Heart right ventricle (tissue), 16 donors: ENCODE measurements at regions of chr6 and their contacts with region 1.

Region 1: GRCh38 chr6:44446628-44447306 is 59.3 kb downstream of the CDC5L start:
- DNase-seq: no peak
- ATAC-seq: no peak
- H3K4me3 ChIP-seq: no peak overlapping the region
- H3K27ac ChIP-seq: no peak overlapping the region
- H3K4me1 ChIP-seq: peaks cover 0 to 18% (median under 1%) of the 10 kb centered on the region in 9 donors
- H3K27me3 ChIP-seq: no peaks in the 10 kb centered on the region
- CTCF ChIP-seq: no peak

Region 2: DNA sequence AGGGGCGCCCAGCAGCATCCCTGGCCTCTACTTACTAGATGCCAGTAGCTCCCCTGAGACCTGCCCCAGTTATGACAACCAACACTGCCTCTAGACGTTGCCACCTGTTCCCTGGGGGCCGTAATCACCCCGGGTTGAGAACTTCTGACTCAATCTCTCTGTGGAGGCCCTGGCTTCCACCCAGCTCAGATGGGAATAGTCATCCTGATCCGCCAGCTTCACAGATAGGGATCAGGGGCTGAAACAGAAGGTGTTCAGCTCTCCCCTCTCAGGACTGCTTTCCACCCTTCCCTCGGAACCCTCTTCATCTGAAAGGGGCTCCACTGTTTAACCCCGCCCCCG is 284.8 kb before region 1 on chr6:
- intact Hi-C with region 1: loop called in 1 of 10 experiments (anchors 10 kb)
- DNase-seq: no peak
- ATAC-seq: no peak
- H3K4me3 ChIP-seq: no peak overlapping the region
- H3K27ac ChIP-seq: no peak overlapping the region
- H3K4me1 ChIP-seq: no peaks in the 10 kb centered on the region
- H3K27me3 ChIP-seq: peaks cover 0 to 5% (median 0%) of the 10 kb centered on the region in 7 donors
- CTCF ChIP-seq: no peak